ENCODE measurements at regions of chr12 and their contacts with region 1.

Region 1: DNA sequence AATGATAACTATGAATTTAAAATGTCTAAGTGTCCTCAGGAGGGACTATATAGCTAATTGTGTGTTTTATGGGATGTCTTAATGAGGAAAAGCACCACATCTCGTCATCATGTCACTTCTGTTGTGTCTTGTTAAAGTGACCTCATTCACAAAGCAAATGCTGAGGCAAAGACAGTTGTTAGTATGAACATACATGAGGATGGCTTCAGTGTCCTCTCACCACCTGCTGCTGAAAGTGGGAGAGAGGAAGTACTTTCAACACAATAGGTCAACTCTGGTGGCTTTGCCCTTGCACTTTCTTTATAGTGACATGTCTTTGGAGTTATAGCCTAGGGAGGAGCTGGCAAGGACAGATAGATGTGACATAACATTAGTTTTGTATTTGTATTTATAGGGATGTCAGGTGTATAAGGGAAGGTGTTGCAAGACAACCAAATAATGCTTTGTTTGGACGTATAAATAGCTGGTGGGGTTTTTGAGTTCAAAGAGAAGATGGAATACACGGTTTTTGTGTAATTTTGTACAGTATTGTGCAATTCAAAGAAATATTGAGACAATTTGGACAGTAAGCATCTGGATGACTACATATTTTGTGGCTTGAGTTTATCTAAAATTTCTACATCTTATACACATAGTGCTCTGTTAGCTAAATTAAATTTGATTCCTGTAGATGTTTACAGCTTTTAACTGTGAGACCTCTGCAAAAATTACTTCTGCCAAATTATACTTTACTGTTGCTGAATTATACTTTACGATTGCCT is 131.7 kb upstream of the ATP2B1 start:
- DNase-seq: no peak
- ATAC-seq: no peak
- H3K4me3 Mint-ChIP-seq: no peak overlapping the region
- H3K27ac Mint-ChIP-seq: no peak overlapping the region
- H3K4me1 Mint-ChIP-seq: peaks cover 10% of the 10 kb centered on the region
- H3K27me3 Mint-ChIP-seq: no peaks in the 10 kb centered on the region
- CTCF ChIP-seq: no peak

Region 2: GRCh38 chr12:89800435-89800834 is 39.9 kb before region 1 on chr12:
- CTCF ChIA-PET with region 1: no interaction called
- POLR2A ChIA-PET with region 1: no interaction called
- intact Hi-C with region 1: loop called (anchors 5 kb)
- DNase-seq: no peak
- ATAC-seq: no peak
- H3K4me3 Mint-ChIP-seq: no peak overlapping the region
- H3K27ac Mint-ChIP-seq: no peak overlapping the region
- H3K4me1 Mint-ChIP-seq: peaks cover 32% of the 10 kb centered on the region
- H3K27me3 Mint-ChIP-seq: no peaks in the 10 kb centered on the region
- CTCF ChIP-seq: no peak

Region 3: DNA sequence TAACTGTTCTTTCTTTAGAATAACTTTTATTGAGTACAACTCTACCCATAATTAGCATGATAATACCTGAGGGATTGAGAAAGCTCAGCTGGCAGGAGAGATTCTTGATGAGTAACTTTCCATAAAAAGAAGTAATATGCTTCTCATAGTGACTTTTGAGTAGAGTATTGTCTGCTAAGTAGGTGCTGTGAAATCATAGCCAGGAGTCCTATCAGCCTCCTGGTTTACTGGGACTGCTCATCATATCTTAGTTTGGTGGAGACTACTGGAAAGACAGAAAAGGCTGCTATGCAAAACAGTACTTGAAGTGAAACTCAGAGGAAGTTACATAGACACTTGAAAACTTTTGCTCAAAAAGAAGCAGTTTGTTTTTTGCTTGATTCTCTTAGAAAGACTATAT is 18.4 kb before region 1 on chr12:
- CTCF ChIA-PET with region 1: no interaction called
- POLR2A ChIA-PET with region 1: no interaction called
- intact Hi-C with region 1: loop called (anchors 2 kb)
- DNase-seq: no peak
- ATAC-seq: peak; percentile 65
- H3K4me3 Mint-ChIP-seq: no peak overlapping the region
- H3K27ac Mint-ChIP-seq: peak overlapping the region; percentile 54
- H3K4me1 Mint-ChIP-seq: peaks cover 30% of the 10 kb centered on the region
- H3K27me3 Mint-ChIP-seq: no peaks in the 10 kb centered on the region
- CTCF ChIP-seq: no peak